ENCODE measurements at regions of chr15 and their contacts with region 1.

Region 1: GRCh38 chr15:63288778-63289378 is 11.5 kb downstream of the APH1B start:
- DNase-seq: peak; percentile 73
- H3K4me3 ChIP-seq: no peak overlapping the region
- H3K27ac ChIP-seq: no peak overlapping the region
- H3K4me1 ChIP-seq: peaks cover 19% of the 10 kb centered on the region
- H3K27me3 ChIP-seq: no peaks in the 10 kb centered on the region
- CTCF ChIP-seq: peak; percentile 85

Region 2: GRCh38 chr15:63264688-63265302 is 24.1 kb before region 1 on chr15:
- CTCF ChIA-PET with region 1: interaction called, 10 read pairs
- POLR2A ChIA-PET with region 1: no interaction called
- intact Hi-C with region 1: no loop called
- DNase-seq: no peak
- H3K4me3 ChIP-seq: no peak overlapping the region
- H3K27ac ChIP-seq: no peak overlapping the region
- H3K4me1 ChIP-seq: no peaks in the 10 kb centered on the region
- H3K27me3 ChIP-seq: no peaks in the 10 kb centered on the region
- CTCF ChIP-seq: no peak

Region 3: DNA sequence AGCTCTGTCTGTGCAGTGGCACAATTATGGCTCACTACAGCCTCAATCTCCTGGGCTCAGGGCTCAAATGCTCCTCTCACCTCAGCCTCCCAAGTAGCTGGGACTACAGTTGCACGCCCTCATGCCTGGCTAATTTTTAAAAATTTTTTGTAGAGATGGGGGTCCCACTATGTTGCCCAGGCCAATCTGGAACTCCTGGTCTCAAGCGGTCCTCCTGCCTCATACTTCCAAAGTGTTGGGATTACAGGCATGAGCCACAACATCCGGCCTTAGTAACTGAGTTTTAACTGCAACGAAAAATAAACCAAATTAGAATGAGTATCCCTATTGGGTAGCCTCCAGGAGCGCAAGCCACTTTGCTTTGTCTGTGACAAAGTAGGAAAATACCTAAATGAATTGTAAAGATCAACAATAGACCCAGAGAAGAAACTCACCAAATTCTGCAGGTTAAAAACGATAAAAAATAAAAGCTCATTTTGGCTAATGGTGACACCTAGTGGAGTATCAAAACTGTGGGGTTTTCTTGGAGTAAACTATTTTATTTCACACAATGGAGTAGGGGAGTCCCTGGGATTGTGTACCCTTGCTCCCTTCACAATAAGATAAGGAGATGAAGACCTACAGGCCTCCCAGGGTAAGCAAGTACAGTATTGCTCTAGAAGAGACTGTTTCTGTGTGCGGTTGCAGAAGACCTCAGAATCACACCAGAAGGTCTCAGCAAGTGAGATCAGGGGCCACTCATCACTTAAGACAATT is 113.8 kb after region 1 on chr15:
- CTCF ChIA-PET with region 1: interaction called, 9 read pairs
- POLR2A ChIA-PET with region 1: no interaction called
- intact Hi-C with region 1: loop called (anchors 1 kb)
- DNase-seq: peak; percentile 67
- H3K4me3 ChIP-seq: no peak overlapping the region
- H3K27ac ChIP-seq: no peak overlapping the region
- H3K4me1 ChIP-seq: peaks cover 25% of the 10 kb centered on the region
- H3K27me3 ChIP-seq: no peaks in the 10 kb centered on the region
- CTCF ChIP-seq: peak; percentile 68

Region 4: DNA sequence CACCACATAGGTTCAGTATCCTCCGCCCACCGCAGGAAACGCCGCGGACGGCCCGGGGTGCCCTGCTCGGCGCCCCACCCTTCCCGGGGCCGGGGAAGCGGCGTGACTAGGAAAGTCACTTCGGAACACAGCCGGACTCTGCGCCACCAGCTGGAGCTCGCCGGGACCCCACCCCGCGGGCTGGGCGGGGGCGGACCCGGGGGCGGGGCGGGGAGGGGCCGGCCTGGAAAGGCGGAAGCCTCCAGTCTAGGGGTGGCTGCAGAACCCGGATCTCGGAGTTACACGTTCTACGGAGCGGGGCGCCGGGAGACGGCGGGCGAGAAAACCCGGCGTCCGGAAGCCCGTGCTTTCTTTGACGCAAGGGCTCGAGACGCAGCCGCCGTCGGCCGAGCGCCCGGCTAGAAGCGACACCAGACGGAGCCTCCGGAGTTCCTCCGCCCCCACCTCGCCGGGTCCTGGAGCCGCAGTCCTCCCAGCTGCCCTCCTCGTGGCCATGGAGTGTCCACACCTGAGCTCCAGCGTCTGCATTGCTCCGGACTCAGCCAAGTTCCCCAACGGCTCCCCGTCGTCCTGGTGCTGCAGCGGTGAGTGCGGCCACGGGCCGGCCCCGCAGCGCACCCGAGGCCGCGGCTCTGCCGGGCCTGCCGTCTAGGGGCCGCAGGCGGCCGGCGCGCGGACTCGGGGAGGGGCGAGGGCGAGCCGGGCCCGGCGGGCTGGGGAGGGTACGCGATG is 215.5 kb after region 1 on chr15 and contains the start of gene USP3:
- CTCF ChIA-PET with region 1: no interaction called
- POLR2A ChIA-PET with region 1: no interaction called
- intact Hi-C with region 1: loop called (anchors 10 kb)
- DNase-seq: peak; percentile 97
- H3K4me3 ChIP-seq: peak within 1 kb of the TSS; percentile 85
- H3K27ac ChIP-seq: peak within 1 kb of the TSS; percentile 89
- H3K4me1 ChIP-seq: peaks cover 61% of the 10 kb centered on the region
- H3K27me3 ChIP-seq: no peaks in the 10 kb centered on the region
- CTCF ChIP-seq: no peak
- total RNA-seq, gene USP3: 65.3 and 76.7 TPM in 2 replicates

Region 5: GRCh38 chr15:63600616-63601025 is 311.7 kb after region 1 on chr15:
- CTCF ChIA-PET with region 1: interaction called, 3 read pairs
- POLR2A ChIA-PET with region 1: no interaction called
- intact Hi-C with region 1: loop called (anchors 10 kb)
- DNase-seq: peak; percentile 96
- H3K4me3 ChIP-seq: peak overlapping the region; percentile 77
- H3K27ac ChIP-seq: peak overlapping the region; percentile 84
- H3K4me1 ChIP-seq: peaks cover 17% of the 10 kb centered on the region
- H3K27me3 ChIP-seq: no peaks in the 10 kb centered on the region
- CTCF ChIP-seq: no peak

Region 6: DNA sequence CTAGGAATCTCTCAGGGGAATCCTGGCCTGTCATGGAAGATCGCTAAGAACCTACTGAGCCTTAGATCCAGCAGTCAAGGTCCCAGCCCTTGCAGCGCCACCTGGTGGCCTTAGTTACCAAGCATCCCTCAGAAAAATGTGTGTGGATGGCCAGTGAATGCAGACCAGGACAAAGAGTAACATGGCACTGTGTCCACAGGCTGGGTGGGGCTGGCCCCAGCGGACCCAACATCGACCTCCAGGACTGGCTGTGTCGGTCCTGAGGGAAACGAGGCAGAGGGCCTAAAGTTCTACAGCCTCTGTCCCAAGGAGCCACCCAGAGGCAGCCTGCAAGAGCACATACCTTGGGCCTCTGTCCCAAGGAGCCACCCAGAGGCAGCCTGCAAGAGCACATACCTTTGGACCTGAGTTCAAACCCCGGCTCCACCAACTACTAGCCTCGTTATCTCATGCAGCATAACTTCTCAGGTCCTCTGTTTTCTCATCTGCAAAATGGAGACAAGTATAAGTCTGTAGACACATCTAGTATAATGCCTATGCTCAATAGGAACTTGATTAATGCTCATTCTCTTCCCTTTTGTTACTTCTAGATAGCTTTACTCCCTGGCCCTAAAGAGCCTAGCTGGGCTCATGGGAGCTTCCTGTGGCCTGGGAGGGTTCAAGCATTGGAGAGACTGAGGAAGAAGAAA is 602.3 kb after region 1 on chr15:
- CTCF ChIA-PET with region 1: no interaction called
- POLR2A ChIA-PET with region 1: no interaction called
- intact Hi-C with region 1: loop called (anchors 10 kb)
- DNase-seq: peak; percentile 87
- H3K4me3 ChIP-seq: no peak overlapping the region
- H3K27ac ChIP-seq: no peak overlapping the region
- H3K4me1 ChIP-seq: no peaks in the 10 kb centered on the region
- H3K27me3 ChIP-seq: no peaks in the 10 kb centered on the region
- CTCF ChIP-seq: peak; percentile 96

Measured in A673 (cell line).